ENCODE measurements at regions of chr11 and their contacts with region 1.

Region 1: GRCh38 chr11:72430741-72431570 is 3.4 kb downstream of the CLPB start:
- DNase-seq: peak; percentile 63
- H3K4me3 Mint-ChIP-seq: no peak overlapping the region
- H3K27ac Mint-ChIP-seq: peak overlapping the region; percentile 50
- H3K4me1 Mint-ChIP-seq: peaks cover 60% of the 10 kb centered on the region
- H3K27me3 Mint-ChIP-seq: no peaks in the 10 kb centered on the region

Region 2: GRCh38 chr11:71977743-71978418 is 453.1 kb before region 1 on chr11:
- CTCF ChIA-PET with region 1: interaction called, 23 read pairs
- DNase-seq: peak; percentile 72
- H3K4me3 Mint-ChIP-seq: no peak overlapping the region
- H3K27ac Mint-ChIP-seq: no peak overlapping the region
- H3K4me1 Mint-ChIP-seq: no peaks in the 10 kb centered on the region
- H3K27me3 Mint-ChIP-seq: no peaks in the 10 kb centered on the region

Region 3: GRCh38 chr11:72189461-72190275 is 241.3 kb before region 1 on chr11:
- CTCF ChIA-PET with region 1: interaction called, 15 read pairs
- DNase-seq: no peak
- H3K4me3 Mint-ChIP-seq: no peak overlapping the region
- H3K27ac Mint-ChIP-seq: no peak overlapping the region
- H3K4me1 Mint-ChIP-seq: no peaks in the 10 kb centered on the region
- H3K27me3 Mint-ChIP-seq: peaks cover 8% of the 10 kb centered on the region

Region 4: GRCh38 chr11:72292106-72292785 is 138.7 kb before region 1 on chr11:
- CTCF ChIA-PET with region 1: interaction called, 37 read pairs
- DNase-seq: no peak
- H3K4me3 Mint-ChIP-seq: no peak overlapping the region
- H3K27ac Mint-ChIP-seq: no peak overlapping the region
- H3K4me1 Mint-ChIP-seq: no peaks in the 10 kb centered on the region
- H3K27me3 Mint-ChIP-seq: no peaks in the 10 kb centered on the region

Region 5: DNA sequence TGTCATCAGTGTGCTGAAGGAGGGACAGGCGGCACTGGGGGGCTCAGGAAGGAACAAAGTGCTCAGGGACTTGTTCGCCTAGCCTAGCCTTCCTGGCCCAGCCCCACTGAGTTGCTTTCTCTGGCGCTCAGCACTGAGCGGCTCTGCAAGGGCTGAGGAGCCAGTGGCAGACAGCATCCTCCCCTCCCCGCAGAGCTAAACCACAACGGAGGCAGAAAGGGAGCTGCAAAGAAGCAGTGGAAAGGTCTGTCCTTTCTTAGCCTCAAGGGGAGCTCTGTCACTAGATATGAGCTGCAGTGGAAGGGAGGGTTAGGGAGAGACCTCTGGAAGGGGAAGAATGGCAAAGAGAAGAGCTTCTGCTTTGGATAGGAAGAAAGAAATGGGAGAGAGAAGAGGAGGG is 97.3 kb before region 1 on chr11:
- CTCF ChIA-PET with region 1: interaction called, 42 read pairs
- DNase-seq: peak; percentile 84
- H3K4me3 Mint-ChIP-seq: no peak overlapping the region
- H3K27ac Mint-ChIP-seq: peak overlapping the region; percentile 3
- H3K4me1 Mint-ChIP-seq: peaks cover 31% of the 10 kb centered on the region
- H3K27me3 Mint-ChIP-seq: no peaks in the 10 kb centered on the region

Region 6: DNA sequence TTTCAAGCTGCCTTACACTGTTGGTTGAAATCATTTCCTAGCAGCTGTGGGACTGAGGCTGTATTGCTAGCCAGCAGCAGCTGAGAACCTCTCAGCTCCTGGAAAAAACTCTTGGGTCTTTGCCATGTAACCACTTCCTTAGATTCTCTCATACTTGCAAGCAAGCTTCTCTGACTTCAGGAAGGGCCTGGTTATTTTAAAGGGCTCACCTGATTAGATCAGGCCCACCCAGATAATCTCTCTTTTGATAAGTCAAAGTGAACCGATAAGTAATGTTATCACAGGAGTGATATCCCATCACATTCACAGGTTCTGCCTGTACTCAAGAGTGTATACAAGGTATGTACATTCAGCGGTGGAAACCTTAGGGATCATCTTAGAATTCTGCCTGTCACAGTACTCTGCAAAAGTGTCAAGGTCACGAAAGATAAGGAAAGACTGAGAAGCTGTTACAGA is 10.8 kb after region 1 on chr11:
- CTCF ChIA-PET with region 1: interaction called, 20 read pairs
- DNase-seq: no peak
- H3K4me3 Mint-ChIP-seq: no peak overlapping the region
- H3K27ac Mint-ChIP-seq: no peak overlapping the region
- H3K4me1 Mint-ChIP-seq: peaks cover 19% of the 10 kb centered on the region
- H3K27me3 Mint-ChIP-seq: peaks cover 8% of the 10 kb centered on the region

Region 7: DNA sequence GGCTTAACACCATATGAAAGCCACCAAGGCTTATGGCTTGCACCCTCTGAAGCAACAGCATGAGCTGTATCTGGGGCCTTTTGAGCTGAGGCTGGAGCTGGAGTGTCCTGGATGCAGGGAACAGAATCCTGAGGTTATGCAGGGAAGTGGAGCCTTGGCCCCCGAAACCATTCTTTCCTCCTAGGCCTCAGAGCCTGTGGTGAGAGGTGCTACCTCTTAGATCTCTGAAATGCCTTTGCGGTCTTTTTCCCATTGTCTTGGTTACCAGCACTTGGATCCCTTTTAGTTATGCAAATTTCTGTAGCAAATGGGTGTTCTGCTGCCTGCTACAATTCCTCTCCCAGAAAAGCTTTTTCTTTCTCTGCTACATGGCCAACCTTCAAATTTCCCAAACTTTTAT is 76.1 kb after region 1 on chr11:
- CTCF ChIA-PET with region 1: no interaction called
- DNase-seq: no peak
- H3K4me3 Mint-ChIP-seq: no peak overlapping the region
- H3K27ac Mint-ChIP-seq: no peak overlapping the region
- H3K4me1 Mint-ChIP-seq: no peaks in the 10 kb centered on the region
- H3K27me3 Mint-ChIP-seq: peaks cover 40% of the 10 kb centered on the region

Region 8: GRCh38 chr11:72534565-72535547 is 103.9 kb after region 1 on chr11:
- CTCF ChIA-PET with region 1: no interaction called
- DNase-seq: no peak
- H3K4me3 Mint-ChIP-seq: no peak overlapping the region
- H3K27ac Mint-ChIP-seq: no peak overlapping the region
- H3K4me1 Mint-ChIP-seq: no peaks in the 10 kb centered on the region
- H3K27me3 Mint-ChIP-seq: peaks cover 63% of the 10 kb centered on the region

Region 9: DNA sequence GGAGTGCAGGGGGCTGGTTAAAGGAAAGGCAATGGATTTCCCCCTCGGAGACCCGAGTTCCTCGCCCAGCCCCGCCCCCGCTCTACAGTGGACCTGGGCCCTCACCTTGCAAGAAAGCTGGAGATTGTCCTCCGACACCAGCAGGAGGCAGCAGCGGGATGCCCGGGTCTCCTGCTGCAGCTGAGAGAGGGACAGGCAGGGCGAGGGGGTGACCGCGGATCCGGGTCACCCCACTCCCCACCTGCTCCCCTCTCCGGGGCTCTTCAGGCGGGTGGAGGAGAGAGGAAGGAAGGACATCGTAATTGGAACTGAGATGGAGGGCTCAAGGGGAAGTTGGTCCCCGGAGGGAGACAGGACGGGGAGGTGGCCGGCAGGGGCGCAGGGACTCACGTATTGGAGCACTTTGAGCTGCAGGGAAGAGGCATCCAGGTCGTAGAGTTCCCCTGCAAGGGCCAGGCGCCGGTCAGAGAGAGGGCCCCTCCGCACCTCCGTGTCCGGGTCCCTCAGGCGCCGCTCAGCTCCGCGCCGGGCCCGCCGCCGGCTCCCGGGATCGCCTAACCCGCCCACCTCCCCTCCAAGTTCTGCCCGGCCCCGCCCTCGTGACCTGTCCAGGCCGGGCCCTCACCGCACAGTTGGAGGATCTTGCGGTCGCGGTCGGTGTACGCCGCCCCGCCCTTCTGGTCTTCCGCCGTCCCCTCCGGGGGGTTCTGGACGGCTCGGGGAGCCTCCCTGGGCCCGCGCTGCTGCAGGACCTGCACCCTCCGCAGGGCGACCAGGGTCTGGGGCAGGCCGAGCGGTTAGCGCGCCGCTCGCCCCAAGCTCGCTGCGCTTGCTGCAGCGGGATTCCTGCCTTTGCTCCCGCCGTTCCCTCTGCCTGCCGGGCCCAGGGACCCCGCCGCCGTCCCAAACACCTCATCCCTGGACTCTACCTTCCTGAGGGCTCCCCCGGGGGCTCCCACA is 159.1 kb after region 1 on chr11:
- CTCF ChIA-PET with region 1: no interaction called
- DNase-seq: peak; percentile 65
- H3K4me3 Mint-ChIP-seq: peak overlapping the region; percentile 25
- H3K27ac Mint-ChIP-seq: no peak overlapping the region
- H3K4me1 Mint-ChIP-seq: peaks cover 42% of the 10 kb centered on the region
- H3K27me3 Mint-ChIP-seq: peaks cover 87% of the 10 kb centered on the region